Left ventricle myocardium superior (tissue), 1 donor: ENCODE measurements at regions of chr12 and their contacts with region 1.

Region 1: DNA sequence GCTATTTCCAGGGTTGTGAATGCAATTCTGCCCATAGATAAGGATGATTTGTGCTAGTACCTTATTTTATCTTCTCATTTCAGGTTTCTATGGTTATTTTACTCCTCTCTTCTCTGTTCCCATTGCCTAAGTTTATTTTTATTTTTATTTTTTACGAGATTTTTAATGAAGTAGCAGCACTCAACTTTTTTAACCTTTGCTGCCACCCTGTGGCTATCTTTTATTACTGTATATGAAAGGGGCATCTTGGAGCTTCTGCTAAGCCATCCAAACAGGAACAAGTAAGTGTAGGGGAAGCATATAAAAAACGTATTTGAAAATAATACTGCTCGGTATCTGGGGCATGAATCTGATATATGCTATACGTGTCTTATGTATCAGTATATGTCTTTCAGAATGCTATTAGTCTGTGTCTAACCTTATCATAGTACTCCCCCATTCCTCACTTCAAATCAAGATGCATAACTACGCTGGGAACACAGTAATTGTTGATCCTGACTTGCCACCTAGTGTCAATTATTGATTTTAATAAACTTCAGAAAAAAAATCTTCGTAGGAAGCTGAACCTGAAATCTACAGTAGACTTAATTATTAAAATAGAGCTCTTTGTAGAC is 60.3 kb downstream of the KLRG1 start:
- DNase-seq: no peak
- ATAC-seq: peak; percentile 47

Region 2: GRCh38 chr12:8687846-8688601 is 361.6 kb before region 1 on chr12:
- intact Hi-C with region 1: loop called (anchors 10 kb)
- DNase-seq: no peak
- ATAC-seq: peak; percentile 95

Region 3: DNA sequence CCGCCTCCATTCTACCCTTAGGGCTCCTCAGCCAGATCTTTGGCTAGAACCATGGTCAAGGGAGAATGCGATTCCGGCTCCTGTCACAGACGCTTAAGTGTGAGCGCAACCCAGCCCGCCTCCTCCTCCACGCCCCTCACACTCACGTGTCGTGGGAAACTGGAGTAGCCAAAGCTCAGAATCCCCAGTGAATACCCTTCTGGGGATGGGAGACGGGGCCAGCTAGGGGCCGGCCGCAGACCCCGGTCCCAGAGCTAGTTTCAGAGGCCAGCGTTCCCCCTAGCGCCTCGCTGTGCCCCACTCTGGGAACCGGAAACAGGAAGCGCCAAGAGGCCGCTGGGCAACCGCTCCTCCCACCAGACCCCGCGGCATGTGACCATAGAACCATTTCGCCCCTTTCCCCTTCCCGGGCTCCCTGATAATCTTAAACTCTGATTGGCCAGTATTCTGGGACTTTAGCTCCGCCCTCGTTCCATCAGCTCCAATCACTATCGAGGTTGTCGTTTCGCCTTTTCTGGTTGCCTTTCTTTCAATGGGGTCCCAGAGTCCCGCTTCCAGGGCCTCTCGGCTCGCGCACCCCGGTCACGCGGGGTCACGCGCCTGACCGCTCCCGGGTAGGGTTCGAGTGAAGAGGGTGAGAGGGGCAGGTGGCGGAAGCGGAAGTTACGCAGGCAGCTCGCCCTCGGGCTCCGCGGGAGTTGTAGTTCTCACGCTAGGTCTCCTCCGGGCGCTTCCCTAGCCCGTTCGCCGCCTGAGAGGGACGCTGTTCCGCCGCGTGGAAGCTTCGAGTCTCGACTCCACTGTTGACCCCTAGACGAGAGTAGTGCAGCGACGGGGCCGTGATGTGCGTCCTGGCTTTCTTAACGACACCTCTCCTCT is 100.0 kb before region 1 on chr12 and contains the start of gene M6PR:
- intact Hi-C with region 1: loop called (anchors 5 kb)
- DNase-seq: peak; percentile 95
- ATAC-seq: peak; percentile 96
- total RNA-seq, gene M6PR: 87.5 TPM

Region 4: GRCh38 chr12:9134981-9135628 is 85.5 kb after region 1 on chr12:
- intact Hi-C with region 1: no loop called
- DNase-seq: no peak
- ATAC-seq: peak; percentile 14